Colonic mucosa (tissue), 4 donors: ENCODE measurements at regions of chr6 and their contacts with region 1.

Region 1: GRCh38 chr6:7725849-7726415 is at the start of gene BMP6:
- DNase-seq: peak; percentile 90
- H3K4me3 ChIP-seq: peak within 1 kb of the TSS; percentile 61
- H3K27ac ChIP-seq: no peak within 1 kb of the TSS
- H3K4me1 ChIP-seq: peaks cover 15% of the 10 kb centered on the region
- H3K27me3 ChIP-seq: peaks cover 47% of the 10 kb centered on the region
- CTCF ChIP-seq: no peak
- total RNA-seq, gene BMP6: 0.62 to 2.1 TPM

Region 2: GRCh38 chr6:7910654-7911344 is 184.9 kb after region 1 on chr6 and contains the start of gene TXNDC5:
- intact Hi-C with region 1: loop called (anchors 10 kb)
- DNase-seq: peak; percentile 81
- H3K4me3 ChIP-seq: peak within 1 kb of the TSS; percentile 74
- H3K27ac ChIP-seq: peak within 1 kb of the TSS; percentile 67
- H3K4me1 ChIP-seq: no peaks in the 10 kb centered on the region
- H3K27me3 ChIP-seq: no peaks in the 10 kb centered on the region
- CTCF ChIP-seq: no peak
- total RNA-seq, gene TXNDC5: 82.2 to 126 TPM

Region 3: GRCh38 chr6:7992002-7992815 is 266.3 kb after region 1 on chr6:
- intact Hi-C with region 1: loop called (anchors 5 kb)
- DNase-seq: no peak
- H3K4me3 ChIP-seq: no peak overlapping the region
- H3K27ac ChIP-seq: no peak overlapping the region
- H3K4me1 ChIP-seq: no peaks in the 10 kb centered on the region
- H3K27me3 ChIP-seq: no peaks in the 10 kb centered on the region
- CTCF ChIP-seq: peak; percentile 24

Region 4: DNA sequence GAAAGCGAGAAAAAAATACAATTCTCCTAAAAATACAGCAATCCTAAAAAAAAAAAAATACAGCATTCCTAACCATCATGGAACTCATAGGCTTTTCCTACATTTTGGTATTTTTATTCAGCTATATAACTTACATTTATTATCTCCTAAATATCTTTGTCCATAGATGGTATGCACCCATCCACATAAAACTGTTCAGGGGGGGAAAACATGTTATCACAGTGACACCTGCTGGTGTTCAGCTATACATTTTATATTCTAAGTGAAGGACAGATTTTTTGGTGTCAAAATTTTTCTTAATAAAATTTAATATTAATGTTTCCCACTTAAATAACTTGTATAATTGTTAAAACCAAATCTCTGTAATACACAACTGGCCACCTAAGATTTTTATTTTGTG is 280.3 kb after region 1 on chr6:
- intact Hi-C with region 1: loop called (anchors 5 kb)
- DNase-seq: no peak
- H3K4me3 ChIP-seq: no peak overlapping the region
- H3K27ac ChIP-seq: no peak overlapping the region
- H3K4me1 ChIP-seq: no peaks in the 10 kb centered on the region
- H3K27me3 ChIP-seq: no peaks in the 10 kb centered on the region
- CTCF ChIP-seq: peak; percentile 27

Region 5: DNA sequence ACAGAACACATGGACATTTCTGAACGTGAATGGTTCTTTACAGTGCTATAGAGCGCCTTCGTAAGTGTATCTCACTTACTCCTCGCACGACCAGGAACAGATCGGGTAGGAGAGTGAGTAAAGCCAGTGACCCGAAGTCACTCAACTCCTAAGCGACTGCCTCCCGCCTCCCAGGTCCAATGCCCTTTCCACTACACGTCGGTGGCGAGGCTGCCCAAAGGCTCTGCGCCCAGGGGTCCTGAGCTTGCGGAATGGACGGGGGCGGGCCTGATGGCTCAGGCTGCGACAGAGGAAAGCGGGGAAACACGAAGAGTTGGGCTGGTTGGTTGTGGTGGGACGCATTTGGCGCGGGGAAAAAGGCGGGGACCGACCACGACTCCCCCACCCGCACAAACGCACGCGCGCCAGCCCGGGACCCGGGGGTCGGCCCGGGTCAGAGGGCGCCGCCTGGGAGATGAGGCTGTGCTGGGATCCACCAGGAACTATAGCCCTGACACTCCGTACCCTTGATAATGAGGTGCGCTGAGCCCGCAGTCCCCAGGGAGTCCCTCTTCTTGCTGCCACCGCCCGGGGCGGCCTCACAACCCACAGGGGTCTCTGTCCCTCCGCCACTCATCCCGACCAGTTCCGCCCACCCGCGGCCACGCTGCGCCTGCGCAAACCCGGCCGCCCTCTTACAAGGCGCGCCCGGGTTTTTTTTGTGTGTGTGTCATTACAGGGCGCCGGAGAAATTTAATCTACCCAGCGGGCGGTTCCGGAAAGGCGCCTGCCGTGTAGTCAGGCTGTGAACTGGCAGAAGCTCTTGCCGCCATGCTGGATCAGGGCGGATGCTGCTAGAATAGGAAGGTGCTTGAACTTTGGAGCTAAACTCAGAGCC is 338.1 kb after region 1 on chr6 and contains the start of gene BLOC1S5:
- intact Hi-C with region 1: loop called (anchors 10 kb)
- DNase-seq: peak; percentile 98
- H3K4me3 ChIP-seq: peak within 1 kb of the TSS; percentile 83
- H3K27ac ChIP-seq: peak within 1 kb of the TSS; percentile 85
- H3K4me1 ChIP-seq: peaks cover 4% of the 10 kb centered on the region
- H3K27me3 ChIP-seq: no peaks in the 10 kb centered on the region
- CTCF ChIP-seq: no peak
- total RNA-seq, gene BLOC1S5: 10.3 to 14.1 TPM